MCF 10A (cell line): ENCODE measurements at regions of chr3 and their contacts with region 1.

Region 1: DNA sequence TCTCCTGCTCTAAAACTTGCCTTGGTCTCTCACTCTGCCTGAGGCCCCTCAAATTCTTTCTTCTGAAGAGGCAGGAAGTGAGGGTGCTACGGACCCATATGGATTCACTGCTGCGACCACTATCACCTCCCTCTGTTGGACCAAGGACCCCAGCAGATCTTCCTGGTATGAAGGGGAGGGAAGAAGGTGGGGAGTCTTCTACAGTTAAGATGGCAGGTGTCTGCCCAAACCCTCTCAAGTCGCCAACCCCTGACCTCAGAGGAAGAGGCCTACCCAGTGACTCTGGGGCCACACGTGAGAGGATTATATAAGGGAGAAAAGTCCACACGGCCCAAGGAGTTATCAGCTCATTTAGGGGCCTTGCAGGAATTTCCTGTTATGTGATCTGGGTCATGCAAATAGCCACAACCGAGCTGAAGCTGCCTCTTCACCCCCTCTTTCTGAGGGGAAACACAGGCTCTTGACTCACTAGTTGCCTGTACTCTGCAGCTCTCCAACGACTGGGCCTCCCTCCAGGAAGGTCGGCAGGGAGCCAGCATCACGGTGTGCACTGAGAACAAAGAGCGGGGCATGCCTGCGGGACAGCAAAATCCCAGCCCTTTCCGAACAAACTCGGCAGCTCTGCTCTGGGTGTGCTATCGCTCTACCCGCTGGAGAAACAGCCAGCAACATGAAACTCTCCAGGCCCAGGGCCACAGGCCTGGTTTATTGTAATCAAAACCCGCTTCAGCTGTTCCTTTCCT is 116.0 kb downstream of the XXYLT1 start:
- DNase-seq: peak; percentile 94
- H3K4me3 Mint-ChIP-seq: no peak overlapping the region
- H3K27ac Mint-ChIP-seq: peak overlapping the region; percentile 31
- H3K4me1 Mint-ChIP-seq: peaks cover 31% of the 10 kb centered on the region
- H3K27me3 Mint-ChIP-seq: no peaks in the 10 kb centered on the region
- CTCF ChIP-seq: no peak

Region 2: GRCh38 chr3:195139091-195139839 is 15.7 kb before region 1 on chr3:
- CTCF ChIA-PET with region 1: interaction called, 3 read pairs
- POLR2A ChIA-PET with region 1: interaction called, 10 read pairs
- intact Hi-C with region 1: no loop called
- DNase-seq: no peak
- H3K4me3 Mint-ChIP-seq: peak overlapping the region; percentile 47
- H3K27ac Mint-ChIP-seq: peak overlapping the region; percentile 64
- H3K4me1 Mint-ChIP-seq: peaks cover 18% of the 10 kb centered on the region
- H3K27me3 Mint-ChIP-seq: no peaks in the 10 kb centered on the region
- CTCF ChIP-seq: no peak

Region 3: GRCh38 chr3:195334966-195335365 is 180.0 kb after region 1 on chr3:
- CTCF ChIA-PET with region 1: no interaction called
- POLR2A ChIA-PET with region 1: no interaction called
- intact Hi-C with region 1: no loop called
- DNase-seq: no peak
- H3K4me3 Mint-ChIP-seq: no peak overlapping the region
- H3K27ac Mint-ChIP-seq: no peak overlapping the region
- H3K4me1 Mint-ChIP-seq: no peaks in the 10 kb centered on the region
- H3K27me3 Mint-ChIP-seq: no peaks in the 10 kb centered on the region
- CTCF ChIP-seq: no peak